Naive thymus-derived CD4-positive, alpha-beta T cell (primary cell): ENCODE measurements at regions of chr18 and their contacts with region 1.

Region 1: DNA sequence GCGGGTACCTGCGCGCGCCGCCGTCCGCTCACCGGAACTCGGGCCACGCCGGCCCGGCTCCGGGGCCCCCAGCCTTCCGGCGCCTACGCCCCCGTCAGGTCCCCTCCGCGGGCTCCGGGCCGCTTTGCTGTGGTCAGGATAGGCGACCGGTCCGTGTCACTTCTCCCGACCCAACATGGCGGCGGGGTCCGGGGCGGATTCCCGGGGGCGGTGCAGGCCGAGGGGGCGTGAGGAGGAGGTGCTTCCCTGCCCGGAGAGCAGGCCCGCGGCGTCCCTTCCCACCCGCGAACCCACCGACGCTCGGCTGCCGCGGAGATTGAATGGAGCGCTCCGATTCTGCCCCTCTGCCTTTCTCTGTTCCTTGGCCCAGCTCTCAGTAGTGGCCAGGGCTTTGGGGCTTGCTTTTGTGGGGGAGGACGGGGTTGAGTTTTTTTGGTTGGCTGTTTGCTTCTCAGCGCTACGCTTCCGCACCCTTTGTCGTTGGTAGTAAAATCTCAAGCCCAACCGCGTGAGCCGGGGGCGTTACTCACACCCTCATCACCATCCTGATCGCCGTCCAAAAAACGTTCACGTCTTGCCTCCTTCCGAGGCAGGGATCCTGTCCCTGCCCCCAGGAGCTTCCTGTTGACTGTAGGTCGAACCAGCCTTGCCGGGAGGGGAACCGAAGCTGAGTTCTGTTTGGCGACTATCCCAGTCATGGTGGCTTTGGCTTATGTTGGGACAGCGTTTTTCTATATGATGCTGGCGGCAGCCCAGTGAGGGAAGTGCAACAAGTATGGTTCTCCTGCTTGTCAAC is 532 bp upstream of the YES1 start:
- DNase-seq: peak; percentile 70 to 86 (median 84)
- ATAC-seq: peak; percentile 81
- H3K4me3 ChIP-seq: peak overlapping the region; percentile 60
- H3K4me3 Mint-ChIP-seq: peak overlapping the region; percentile 90 to 98 (median 95)
- H3K27ac ChIP-seq: peak overlapping the region; percentile 94
- H3K27ac Mint-ChIP-seq: peak overlapping the region; percentile 94 to 100 (median 98)
- H3K4me1 ChIP-seq: peaks cover 31 to 36% of the 10 kb centered on the region in 2 donors
- H3K4me1 Mint-ChIP-seq: peaks cover 36 to 78% (median 71%) of the 10 kb centered on the region in 7 donors
- H3K27me3 ChIP-seq: no peaks in the 10 kb centered on the region
- H3K27me3 Mint-ChIP-seq: peaks cover 0 to 6% (median 0%) of the 10 kb centered on the region in 5 donors

Region 2: DNA sequence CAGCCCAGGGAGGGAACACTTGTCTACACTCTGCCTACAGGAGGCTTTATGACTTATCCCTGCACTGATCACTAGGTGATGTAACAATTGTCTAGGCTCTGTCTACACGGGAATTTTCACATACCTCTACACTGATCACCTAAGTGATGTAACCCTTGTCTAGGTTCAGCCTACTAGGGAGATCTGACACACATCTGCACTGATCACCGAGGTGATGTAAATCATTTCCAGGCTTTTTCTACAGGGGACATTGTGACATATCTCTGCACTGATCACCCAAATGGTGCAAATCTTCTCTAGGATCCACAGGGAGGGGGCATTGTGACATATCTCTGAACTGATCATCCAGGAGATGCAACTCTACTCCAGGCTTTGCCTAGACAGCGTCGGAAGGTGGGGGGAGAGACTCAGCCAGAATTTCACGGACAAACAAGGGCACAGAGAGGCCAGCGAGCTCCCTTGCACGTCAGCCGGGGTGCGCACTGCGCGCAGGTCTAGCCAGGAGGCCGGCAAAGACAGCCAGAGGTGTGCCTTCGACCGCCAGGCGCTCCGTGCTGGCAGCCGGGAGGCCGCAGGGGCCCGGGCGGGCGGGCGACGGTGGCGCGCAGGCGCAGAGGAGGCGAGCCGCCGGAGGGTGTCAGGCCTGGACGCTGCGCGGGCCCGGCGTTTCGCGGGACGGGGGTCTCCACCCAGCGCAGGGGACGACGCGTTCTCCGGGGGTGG is 701.1 kb before region 1 on chr18:
- CTCF ChIA-PET with region 1: no interaction called
- POLR2A ChIA-PET with region 1: no interaction called
- intact Hi-C with region 1: loop called in 1 of 2 experiments (anchors 2 kb)
- DNase-seq: peak; percentile 60 to 77 (median 75)
- ATAC-seq: no peak
- H3K4me3 ChIP-seq: peak overlapping the region; percentile 36
- H3K4me3 Mint-ChIP-seq: peak overlapping the region; percentile 79 to 91 (median 89)
- H3K27ac ChIP-seq: peak overlapping the region; percentile 82
- H3K27ac Mint-ChIP-seq: peak overlapping the region; percentile 85 to 99 (median 90)
- H3K4me1 ChIP-seq: peaks cover 0 to 5% of the 10 kb centered on the region in 2 donors
- H3K4me1 Mint-ChIP-seq: peaks cover 4 to 14% (median 7%) of the 10 kb centered on the region in 7 donors
- H3K27me3 ChIP-seq: no peaks in the 10 kb centered on the region
- H3K27me3 Mint-ChIP-seq: peaks cover 0 to 3% (median 0%) of the 10 kb centered on the region in 5 donors

Region 3: GRCh38 chr18:267688-268552 is 544.7 kb before region 1 on chr18 and contains the start of gene THOC1:
- CTCF ChIA-PET with region 1: no interaction called
- POLR2A ChIA-PET with region 1: no interaction called
- intact Hi-C with region 1: loop called (anchors 1 to 5 kb)
- DNase-seq: peak; percentile 88 to 95 (median 93)
- ATAC-seq: peak; percentile 96
- H3K4me3 ChIP-seq: peak within 1 kb of the TSS; percentile 99
- H3K4me3 Mint-ChIP-seq: peak within 1 kb of the TSS; percentile 93 to 100 (median 98)
- H3K27ac ChIP-seq: peak within 1 kb of the TSS; percentile 98
- H3K27ac Mint-ChIP-seq: peak within 1 kb of the TSS; percentile 99 to 100 (median 100)
- H3K4me1 ChIP-seq: peaks cover 11 to 18% of the 10 kb centered on the region in 2 donors
- H3K4me1 Mint-ChIP-seq: peaks cover 19 to 51% (median 38%) of the 10 kb centered on the region in 7 donors
- H3K27me3 ChIP-seq: no peaks in the 10 kb centered on the region
- H3K27me3 Mint-ChIP-seq: no peaks in the 10 kb centered on the region
- total RNA-seq, gene THOC1: 56.7 to 93.7 (median 74.5) TPM

Region 4: GRCh38 chr18:658001-658946 is 154.3 kb before region 1 on chr18:
- CTCF ChIA-PET with region 1: no interaction called
- POLR2A ChIA-PET with region 1: no interaction called
- intact Hi-C with region 1: loop called in 1 of 2 experiments (anchors 2 kb)
- DNase-seq: peak in 3 of 9 donors; percentile 20 to 78 (median 31)
- ATAC-seq: peak; percentile 68
- H3K4me3 ChIP-seq: peak overlapping the region; percentile 79
- H3K4me3 Mint-ChIP-seq: peak overlapping the region; percentile 81 to 96 (median 83)
- H3K27ac ChIP-seq: no peak overlapping the region
- H3K27ac Mint-ChIP-seq: peak overlapping the region in 1 of 9 donors; percentile 94
- H3K4me1 ChIP-seq: peaks cover 0 to 5% of the 10 kb centered on the region in 2 donors
- H3K4me1 Mint-ChIP-seq: peaks cover 0 to 50% (median 10%) of the 10 kb centered on the region in 7 donors
- H3K27me3 ChIP-seq: peaks cover 0 to 5% of the 10 kb centered on the region in 2 donors
- H3K27me3 Mint-ChIP-seq: peaks cover 0 to 43% (median 35%) of the 10 kb centered on the region in 5 donors

Region 5: DNA sequence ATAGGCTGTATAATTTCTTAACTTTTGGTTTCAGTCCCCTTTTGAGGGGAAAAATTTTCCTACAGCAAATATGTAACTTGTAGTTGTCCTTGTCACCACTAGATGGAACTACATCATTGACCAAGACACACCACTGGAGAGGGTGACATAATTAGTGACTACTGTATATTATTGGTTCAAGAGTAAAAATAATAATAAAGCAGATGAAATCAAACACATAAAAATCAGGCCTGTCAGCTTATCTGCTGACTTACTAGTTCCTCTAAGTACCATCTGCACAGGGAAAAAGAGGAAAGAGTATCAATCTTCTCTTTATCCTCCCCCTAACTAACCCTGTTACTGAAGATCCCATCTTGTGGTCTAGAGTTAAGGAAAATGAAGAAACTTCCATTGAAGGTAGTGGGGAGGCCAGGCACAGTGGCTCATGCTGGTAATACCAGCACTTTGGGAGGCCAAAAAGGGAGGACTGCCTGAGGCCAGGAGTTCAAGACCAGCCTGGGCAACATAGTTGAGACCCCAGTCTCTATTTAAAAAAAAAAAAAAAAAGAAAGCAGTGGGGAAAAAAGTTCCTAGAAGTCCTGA is 70.6 kb before region 1 on chr18:
- CTCF ChIA-PET with region 1: interaction called, 4 read pairs
- POLR2A ChIA-PET with region 1: interaction called, 3 read pairs
- intact Hi-C with region 1: loop called (anchors 1 kb)
- DNase-seq: peak in 7 of 9 donors; percentile 27 to 58 (median 49)
- ATAC-seq: peak; percentile 88
- H3K4me3 ChIP-seq: no peak overlapping the region
- H3K4me3 Mint-ChIP-seq: no peak overlapping the region
- H3K27ac ChIP-seq: no peak overlapping the region
- H3K27ac Mint-ChIP-seq: peak overlapping the region in 2 of 9 donors; percentile 38 to 51
- H3K4me1 ChIP-seq: no peaks in the 10 kb centered on the region
- H3K4me1 Mint-ChIP-seq: peaks cover 0 to 10% (median 4%) of the 10 kb centered on the region in 7 donors
- H3K27me3 ChIP-seq: no peaks in the 10 kb centered on the region
- H3K27me3 Mint-ChIP-seq: no peaks in the 10 kb centered on the region

Region 6: GRCh38 chr18:830315-830901 is 17.8 kb after region 1 on chr18:
- CTCF ChIA-PET with region 1: interaction called, 25 read pairs
- POLR2A ChIA-PET with region 1: interaction called, 76 read pairs
- intact Hi-C with region 1: loop called (anchors 1 kb)
- DNase-seq: peak in 7 of 9 donors; percentile 74 to 88 (median 85)
- ATAC-seq: peak; percentile 89
- H3K4me3 ChIP-seq: peak overlapping the region; percentile 6
- H3K4me3 Mint-ChIP-seq: peak overlapping the region; percentile 44 to 77 (median 66)
- H3K27ac ChIP-seq: peak overlapping the region; percentile 54
- H3K27ac Mint-ChIP-seq: peak overlapping the region; percentile 32 to 91 (median 77)
- H3K4me1 ChIP-seq: peaks cover 15 to 22% of the 10 kb centered on the region in 2 donors
- H3K4me1 Mint-ChIP-seq: peaks cover 10 to 40% (median 36%) of the 10 kb centered on the region in 7 donors
- H3K27me3 ChIP-seq: no peaks in the 10 kb centered on the region
- H3K27me3 Mint-ChIP-seq: peaks cover 0 to 11% (median 0%) of the 10 kb centered on the region in 5 donors